Gastrocnemius medialis (tissue), 4 donors: ENCODE measurements at regions of chr16 and their contacts with region 1.

Region 1: GRCh38 chr16:1610276-1611017 is 1.4 kb downstream of the IFT140 start:
- DNase-seq: peak; percentile 76 to 81
- ATAC-seq: peak; percentile 61 to 67
- H3K4me3 ChIP-seq: peak overlapping the region; percentile 69 to 91 (median 80)
- H3K27ac ChIP-seq: peak overlapping the region; percentile 78 to 94 (median 86)
- H3K4me1 ChIP-seq: peaks cover 30 to 33% of the 10 kb centered on the region in 2 donors
- H3K27me3 ChIP-seq: no peaks in the 10 kb centered on the region
- CTCF ChIP-seq: no peak
- POLR2A ChIP-seq: no peak

Region 2: DNA sequence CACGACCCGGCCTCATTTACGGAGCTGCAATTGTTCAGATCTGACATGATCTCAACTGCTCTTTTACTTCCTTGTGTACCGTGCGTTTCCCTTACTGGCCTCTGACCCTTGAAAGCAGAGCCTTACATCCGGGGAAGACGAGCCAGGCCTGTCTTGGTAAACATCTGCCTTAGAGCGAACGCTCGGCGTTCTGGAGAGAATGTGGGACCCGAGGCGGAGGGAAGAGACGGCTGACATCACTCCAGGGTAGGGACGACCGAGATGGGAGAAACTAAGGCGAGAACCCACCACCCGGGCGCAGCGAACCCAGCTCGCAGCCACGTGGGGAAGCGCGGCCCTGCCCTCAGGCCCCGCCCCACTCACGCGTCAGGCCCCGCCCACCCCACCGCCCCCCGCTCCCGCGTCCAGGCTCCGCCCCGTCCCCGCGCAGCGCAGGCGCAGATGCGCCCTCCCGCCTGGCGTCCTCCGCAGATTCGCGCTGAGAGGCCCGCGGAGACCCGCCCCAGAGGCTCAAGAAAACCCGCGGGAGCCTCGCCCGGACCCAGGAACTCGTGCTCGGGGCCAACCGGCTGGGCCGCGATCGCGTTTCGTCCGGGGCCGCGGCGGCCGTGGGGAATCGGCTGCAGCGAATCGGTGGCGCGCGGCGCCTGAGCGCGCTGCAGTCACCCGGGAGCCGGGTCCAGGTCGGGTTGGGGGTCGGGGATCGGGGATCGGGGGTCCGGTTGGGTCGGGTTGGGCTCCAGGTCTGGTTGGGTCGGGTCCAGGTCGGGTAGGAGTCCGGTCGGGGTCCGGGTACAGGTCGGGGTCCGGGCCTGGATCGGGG is 117.3 kb before region 1 on chr16 and contains the start of gene TELO2:
- in situ Hi-C with region 1: no loop called
- intact Hi-C with region 1: loop called (anchors 5 kb)
- DNase-seq: peak; percentile 64 to 68
- ATAC-seq: peak; percentile 87
- H3K4me3 ChIP-seq: peak within 1 kb of the TSS; percentile 78 to 95 (median 83)
- H3K27ac ChIP-seq: peak within 1 kb of the TSS; percentile 84 to 98 (median 92)
- H3K4me1 ChIP-seq: peaks cover 15 to 20% of the 10 kb centered on the region in 2 donors
- H3K27me3 ChIP-seq: no peaks in the 10 kb centered on the region
- CTCF ChIP-seq: no peak
- POLR2A ChIP-seq: peak; percentile 27 to 53
- total RNA-seq, gene TELO2: 2.9 to 11.2 (median 9.8) TPM

Region 3: GRCh38 chr16:1503110-1503925 is 107.1 kb before region 1 on chr16:
- in situ Hi-C with region 1: no loop called
- intact Hi-C with region 1: no loop called
- DNase-seq: no peak
- ATAC-seq: no peak
- H3K4me3 ChIP-seq: no peak overlapping the region
- H3K27ac ChIP-seq: no peak overlapping the region
- H3K4me1 ChIP-seq: no peaks in the 10 kb centered on the region
- H3K27me3 ChIP-seq: no peaks in the 10 kb centered on the region
- CTCF ChIP-seq: no peak
- POLR2A ChIP-seq: no peak

Region 4: DNA sequence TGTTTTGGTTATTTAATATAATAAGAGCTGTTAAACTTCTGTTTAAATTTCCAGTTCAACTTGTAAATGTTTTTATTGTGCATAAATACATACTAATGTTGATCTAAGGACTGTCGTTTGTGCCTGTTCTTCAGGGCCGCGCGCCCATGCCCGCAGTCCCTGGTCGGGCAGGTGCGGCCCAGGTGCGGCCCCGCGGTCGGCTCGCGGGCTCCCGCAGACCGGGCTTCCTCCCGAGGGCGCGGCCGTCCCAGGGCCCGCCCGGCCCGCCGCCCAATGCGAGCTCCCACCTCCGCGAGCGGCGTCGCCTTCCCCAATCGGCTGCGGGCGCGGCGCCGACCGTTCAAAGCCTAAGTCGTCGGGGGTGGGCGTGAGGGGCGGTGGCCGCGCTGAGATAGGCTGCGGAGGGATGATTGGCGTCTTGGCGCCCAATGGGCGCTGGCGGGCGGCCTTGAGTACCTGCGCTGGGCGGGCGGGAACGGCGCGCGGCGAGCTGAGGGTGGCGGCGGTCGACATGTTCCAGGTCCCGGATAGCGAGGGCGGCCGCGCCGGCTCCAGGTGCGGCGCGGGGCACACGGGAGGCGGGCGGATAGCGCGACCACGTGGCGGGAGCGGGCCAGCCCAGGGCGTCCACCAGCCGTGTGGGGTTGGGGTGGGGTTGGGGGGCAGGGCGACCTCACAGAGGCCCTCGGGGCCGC is 67.5 kb after region 1 on chr16 and contains the start of gene JPT2:
- in situ Hi-C with region 1: no loop called
- intact Hi-C with region 1: loop called (anchors 2 kb)
- DNase-seq: peak; percentile 91 to 96
- ATAC-seq: peak; percentile 95 to 98
- H3K4me3 ChIP-seq: peak within 1 kb of the TSS; percentile 53 to 74 (median 68)
- H3K27ac ChIP-seq: peak within 1 kb of the TSS; percentile 68 to 79 (median 71)
- H3K4me1 ChIP-seq: peaks cover 0 to 4% of the 10 kb centered on the region in 2 donors
- H3K27me3 ChIP-seq: no peaks in the 10 kb centered on the region
- CTCF ChIP-seq: no peak
- POLR2A ChIP-seq: peak; percentile 50 to 59
- total RNA-seq, gene JPT2: 8.7 to 28.2 (median 15.9) TPM

Region 5: DNA sequence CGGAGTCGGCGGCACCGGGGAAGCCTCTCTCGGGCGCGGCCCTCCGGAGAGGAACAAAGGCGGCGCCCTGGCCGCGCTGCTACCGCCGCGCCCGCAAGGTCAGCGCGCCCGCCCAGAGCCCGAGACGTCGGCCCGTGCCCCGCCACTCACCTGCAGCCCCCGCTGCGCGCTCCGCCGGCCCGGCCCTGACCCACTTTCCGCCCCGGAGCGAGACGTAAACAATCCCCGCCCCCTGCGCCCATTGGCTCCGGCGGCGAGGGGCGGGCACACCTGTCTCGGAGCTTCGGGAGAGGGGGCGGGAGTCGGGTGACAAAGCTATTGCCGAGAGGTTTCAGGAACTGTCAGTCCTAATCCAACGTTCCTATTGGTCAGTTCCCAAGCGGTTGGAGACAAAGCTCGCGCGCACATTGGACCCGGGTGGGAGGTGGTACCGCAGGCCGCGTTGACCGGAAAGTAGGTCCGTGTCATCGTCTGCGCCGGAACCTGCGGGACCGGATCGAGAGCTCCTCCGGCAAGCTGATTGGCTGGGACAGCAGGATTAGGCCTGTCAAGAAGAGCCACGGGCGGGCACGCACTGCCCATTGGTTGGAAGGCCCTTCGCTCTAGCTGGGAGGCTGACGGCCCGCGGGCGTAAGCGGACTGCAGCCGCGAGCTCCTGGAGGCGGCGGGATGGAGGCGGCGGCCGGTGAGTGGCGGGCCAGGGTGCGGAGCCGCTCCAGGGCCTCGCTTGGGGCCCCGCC is 172.1 kb after region 1 on chr16 and contains the starts of genes NUBP2 and SPSB3:
- in situ Hi-C with region 1: no loop called
- intact Hi-C with region 1: loop called (anchors 5 kb)
- DNase-seq: peak; percentile 100
- ATAC-seq: peak; percentile 97 to 98
- H3K4me3 ChIP-seq: peak within 1 kb of the TSS; percentile 67 to 93 (median 78)
- H3K27ac ChIP-seq: peak within 1 kb of the TSS; percentile 77 to 92 (median 86)
- H3K4me1 ChIP-seq: peaks cover 30 to 38% of the 10 kb centered on the region in 2 donors
- H3K27me3 ChIP-seq: no peaks in the 10 kb centered on the region
- CTCF ChIP-seq: no peak
- POLR2A ChIP-seq: peak; percentile 76 to 93
- total RNA-seq, gene NUBP2: 77.3 to 163 (median 80.7) TPM
- total RNA-seq, gene SPSB3: 86.2 to 161 (median 88.3) TPM

Region 6: DNA sequence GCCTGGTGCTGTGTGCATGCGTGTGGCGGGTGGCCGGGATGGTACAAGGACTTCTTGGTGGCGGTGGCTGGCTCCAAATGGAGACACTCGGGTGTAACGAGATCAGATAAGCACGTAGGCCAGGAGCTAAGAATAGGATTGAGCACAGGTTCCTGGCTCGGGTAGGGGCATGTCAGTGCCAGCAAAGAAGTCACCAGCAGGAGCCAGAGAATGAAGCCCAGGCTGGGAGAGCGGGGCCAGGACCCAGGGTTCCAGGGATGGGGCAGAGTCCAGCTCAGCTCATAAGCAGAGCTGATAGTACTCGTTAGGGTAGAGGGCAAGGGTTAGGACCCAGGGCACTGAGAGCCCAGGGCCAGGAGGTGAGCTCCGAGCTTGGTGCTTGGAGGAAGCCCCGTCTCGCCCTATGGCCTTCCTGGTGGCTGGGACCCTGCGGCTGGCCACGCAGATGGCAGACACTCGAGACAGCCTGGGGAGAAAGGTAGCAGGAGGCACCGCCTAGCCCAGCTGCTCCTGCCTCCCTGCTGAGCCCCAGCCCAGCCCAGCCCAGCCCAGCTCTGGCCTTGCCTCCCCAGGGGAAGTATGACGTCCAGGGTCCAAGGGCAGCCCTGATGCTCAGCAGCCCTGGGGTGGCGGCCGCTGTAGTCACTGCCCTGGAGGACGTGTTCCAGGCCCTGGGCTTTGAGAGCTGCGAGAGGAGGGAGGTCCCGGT is 1533.3 kb after region 1 on chr16:
- in situ Hi-C with region 1: no loop called
- intact Hi-C with region 1: loop called (anchors 5 kb)
- DNase-seq: peak; percentile 86 to 94
- ATAC-seq: peak; percentile 91 to 97
- H3K4me3 ChIP-seq: peak overlapping the region; percentile 24 to 46 (median 40)
- H3K27ac ChIP-seq: peak overlapping the region; percentile 92 to 98 (median 94)
- H3K4me1 ChIP-seq: peaks cover 30 to 56% of the 10 kb centered on the region in 2 donors
- H3K27me3 ChIP-seq: no peaks in the 10 kb centered on the region
- CTCF ChIP-seq: no peak
- POLR2A ChIP-seq: peak; percentile 89 to 90